GM12878 (cell line): ENCODE measurements at regions of chr2 and their contacts with region 1.

Region 1: GRCh38 chr2:127810619-127811396 is at the start of gene WDR33:
- DNase-seq: peak; percentile 87
- ATAC-seq: peak; percentile 97
- H3K4me3 ChIP-seq: peak within 1 kb of the TSS; percentile 84
- H3K27ac ChIP-seq: peak within 1 kb of the TSS; percentile 96
- H3K4me1 ChIP-seq: peaks cover 6% of the 10 kb centered on the region
- H3K27me3 ChIP-seq: no peaks in the 10 kb centered on the region
- CTCF ChIP-seq: peak; percentile 21 to 51 (median 44); a peak in 4 of 6 replicates
- EP300 ChIP-seq: peak in 1 of 2 experiments; percentile 4; a peak in 1 of 4 replicates
- POLR2A ChIP-seq: peak; percentile 92
- RAD21 ChIP-seq: peak; percentile 64
- polyA plus RNA-seq, gene WDR33: 31.9 to 53.0 TPM

Region 2: DNA sequence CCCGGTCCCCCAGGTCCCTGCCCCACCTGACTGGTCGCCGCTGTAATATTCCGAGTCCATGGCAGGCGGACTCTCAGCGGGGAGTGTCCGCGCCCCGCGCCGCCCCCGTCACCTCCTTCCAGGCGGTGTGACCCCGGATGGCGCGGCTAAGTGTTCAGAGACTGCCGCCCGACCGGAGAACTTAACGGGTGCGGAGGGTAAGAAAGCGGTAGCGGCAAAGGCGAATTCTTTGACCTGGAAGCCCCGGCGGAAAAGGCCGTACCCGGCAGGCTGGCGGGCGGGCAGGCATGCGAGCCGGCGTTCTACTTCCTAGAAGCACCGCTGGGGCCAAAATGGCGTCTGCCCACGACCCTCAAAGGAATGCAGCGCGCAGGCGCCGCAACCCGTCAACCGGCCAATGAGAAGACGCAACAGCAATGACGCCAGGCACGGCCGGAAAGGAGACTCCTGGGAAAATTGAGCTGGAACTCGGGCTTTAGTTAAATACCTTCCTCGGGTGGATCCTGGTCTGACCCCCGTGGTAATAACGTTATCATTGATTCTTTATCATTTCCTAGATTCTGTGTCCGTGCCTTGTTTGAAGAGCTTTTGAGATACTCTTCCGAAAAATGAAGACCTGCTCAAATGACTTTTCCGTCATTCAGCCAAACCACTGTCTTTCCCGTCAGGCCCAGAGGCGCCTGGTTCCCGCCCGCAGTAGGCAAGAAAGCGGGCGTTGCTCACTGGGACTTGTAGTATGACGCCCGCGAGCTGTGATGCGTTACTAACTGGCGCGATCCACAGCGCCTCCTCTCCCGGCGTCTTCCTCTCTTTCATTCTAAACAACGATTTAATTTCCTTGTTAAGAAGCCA is 284.4 kb before region 1 on chr2 and contains the start of gene IWS1:
- CTCF ChIA-PET with region 1: no interaction called
- POLR2A ChIA-PET with region 1: no interaction called
- RAD21 ChIA-PET with region 1: no interaction called
- SMC1A ChIA-PET with region 1: no interaction called
- in situ Hi-C with region 1: no loop called
- intact Hi-C with region 1: loop called (anchors 10 kb)
- DNase-seq: peak; percentile 88
- ATAC-seq: peak; percentile 93
- H3K4me3 ChIP-seq: peak within 1 kb of the TSS; percentile 93
- H3K27ac ChIP-seq: peak within 1 kb of the TSS; percentile 83
- H3K4me1 ChIP-seq: no peaks in the 10 kb centered on the region
- H3K27me3 ChIP-seq: no peaks in the 10 kb centered on the region
- CTCF ChIP-seq: peak in 2 of 3 experiments; percentile 3 to 21; a peak in 1 of 6 replicates
- EP300 ChIP-seq: no peak
- POLR2A ChIP-seq: peak; percentile 91
- RAD21 ChIP-seq: no peak
- polyA plus RNA-seq, gene IWS1: 21.9 to 34.2 TPM

Region 3: DNA sequence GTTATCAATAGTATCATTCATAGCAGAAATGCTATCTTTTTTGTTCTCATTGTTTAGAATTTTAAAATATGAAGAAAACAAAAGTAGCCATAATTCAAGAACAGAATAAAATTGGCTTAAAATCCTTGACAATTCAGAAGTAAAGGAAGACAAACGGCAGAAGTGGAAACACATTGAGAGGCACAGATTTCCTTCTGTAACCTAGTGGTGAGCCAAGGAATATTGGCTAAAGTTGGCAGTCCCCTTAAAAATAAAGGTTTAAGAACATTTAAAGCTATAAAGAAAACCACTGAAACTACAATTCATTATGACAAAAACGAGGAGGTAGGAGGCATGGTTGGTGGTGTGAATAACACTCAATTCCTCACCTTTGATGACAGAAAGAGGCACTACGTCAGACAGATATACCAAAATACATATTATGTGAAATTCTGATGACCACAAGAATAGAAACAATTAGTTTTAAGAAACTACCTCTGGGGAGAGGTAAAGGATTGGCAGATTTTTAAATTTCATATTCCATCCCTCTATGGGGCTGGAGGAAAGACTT is 67.3 kb before region 1 on chr2:
- CTCF ChIA-PET with region 1: interaction called, 3 read pairs
- POLR2A ChIA-PET with region 1: interaction called, 7 read pairs
- RAD21 ChIA-PET with region 1: interaction called, 15 read pairs
- SMC1A ChIA-PET with region 1: interaction called, 4 read pairs
- in situ Hi-C with region 1: no loop called
- intact Hi-C with region 1: no loop called
- DNase-seq: no peak
- ATAC-seq: peak; percentile 86
- H3K4me3 ChIP-seq: no peak overlapping the region
- H3K27ac ChIP-seq: no peak overlapping the region
- H3K4me1 ChIP-seq: no peaks in the 10 kb centered on the region; the same call in 1 of the 2 replicates
- H3K27me3 ChIP-seq: no peaks in the 10 kb centered on the region
- CTCF ChIP-seq: 0 out of 6 replicates have a peak, but pooled peaks of 1 of the 3 experiments have one; percentile 11
- EP300 ChIP-seq: peak; percentile 90 to 92; a peak in 3 of 4 replicates
- POLR2A ChIP-seq: no peak
- RAD21 ChIP-seq: no peak

Region 4: DNA sequence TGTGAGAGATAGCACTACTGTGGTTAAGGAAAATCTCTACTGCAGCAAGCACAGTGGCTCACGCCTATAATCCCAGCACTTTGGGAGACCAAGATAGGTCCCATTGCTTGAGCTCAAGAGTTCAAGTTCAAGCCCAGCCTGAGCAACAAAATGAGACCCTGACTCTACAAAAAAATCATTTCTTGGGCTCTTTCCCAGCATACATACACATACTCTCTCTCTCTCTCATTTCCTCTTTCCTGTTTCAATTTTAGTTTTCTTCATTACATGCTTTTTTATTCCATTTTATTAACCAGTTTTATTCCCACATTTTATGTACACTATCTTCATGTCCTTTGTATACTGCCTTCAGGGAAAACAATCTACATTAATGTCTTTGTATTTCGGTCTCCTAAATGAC is 14.4 kb before region 1 on chr2:
- CTCF ChIA-PET with region 1: interaction called, 4 read pairs
- POLR2A ChIA-PET with region 1: interaction called, 50 read pairs
- RAD21 ChIA-PET with region 1: interaction called, 5 read pairs
- SMC1A ChIA-PET with region 1: interaction called, 19 read pairs
- in situ Hi-C with region 1: no loop called
- intact Hi-C with region 1: no loop called
- DNase-seq: peak; percentile 17
- ATAC-seq: peak; percentile 66
- H3K4me3 ChIP-seq: no peak overlapping the region; the same call in 1 of the 2 replicates
- H3K27ac ChIP-seq: peak overlapping the region; percentile 37; the same call in 1 of the 2 replicates
- H3K4me1 ChIP-seq: peaks cover 29% of the 10 kb centered on the region
- H3K27me3 ChIP-seq: no peaks in the 10 kb centered on the region
- CTCF ChIP-seq: no peak
- EP300 ChIP-seq: peak in 1 of 2 experiments; percentile 36; a peak in 1 of 4 replicates
- POLR2A ChIP-seq: no peak
- RAD21 ChIP-seq: no peak

Region 5: DNA sequence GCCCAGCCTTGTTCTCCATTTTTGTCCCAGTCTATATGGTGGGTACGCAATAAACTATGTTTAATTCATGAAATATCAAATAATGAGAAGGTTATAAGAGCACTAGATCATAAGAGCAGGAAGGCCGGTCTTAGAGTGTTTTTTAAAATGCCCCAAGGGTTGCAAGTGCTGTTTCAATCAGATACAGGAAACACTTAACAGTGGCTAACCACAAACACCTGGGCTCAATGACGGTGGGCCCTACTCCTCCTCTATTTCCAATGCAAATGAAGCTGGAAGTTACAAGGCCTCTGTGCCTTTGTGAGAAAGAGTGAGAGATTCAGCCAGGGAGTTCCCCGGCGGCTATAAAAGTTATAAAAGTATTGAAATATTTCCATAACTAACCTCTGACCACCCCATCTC is 19.0 kb after region 1 on chr2:
- CTCF ChIA-PET with region 1: interaction called, 12 read pairs
- POLR2A ChIA-PET with region 1: interaction called, 15 read pairs
- RAD21 ChIA-PET with region 1: interaction called, 9 read pairs
- SMC1A ChIA-PET with region 1: interaction called, 17 read pairs
- in situ Hi-C with region 1: no loop called
- intact Hi-C with region 1: no loop called
- DNase-seq: peak; percentile 96
- ATAC-seq: peak; percentile 94
- H3K4me3 ChIP-seq: peak overlapping the region; percentile 35; the same call in 1 of the 2 replicates
- H3K27ac ChIP-seq: peak overlapping the region; percentile 92
- H3K4me1 ChIP-seq: peaks cover 38% of the 10 kb centered on the region
- H3K27me3 ChIP-seq: no peaks in the 10 kb centered on the region
- CTCF ChIP-seq: no peak
- EP300 ChIP-seq: peak; percentile 92 to 94
- POLR2A ChIP-seq: no peak
- RAD21 ChIP-seq: no peak

Region 6: GRCh38 chr2:127841466-127842178 is 30.8 kb after region 1 on chr2:
- CTCF ChIA-PET with region 1: no interaction called
- POLR2A ChIA-PET with region 1: no interaction called
- RAD21 ChIA-PET with region 1: no interaction called
- SMC1A ChIA-PET with region 1: no interaction called
- in situ Hi-C with region 1: no loop called
- intact Hi-C with region 1: no loop called
- DNase-seq: no peak
- ATAC-seq: no peak
- H3K4me3 ChIP-seq: no peak overlapping the region
- H3K27ac ChIP-seq: no peak overlapping the region
- H3K4me1 ChIP-seq: no peaks in the 10 kb centered on the region
- H3K27me3 ChIP-seq: no peaks in the 10 kb centered on the region
- CTCF ChIP-seq: no peak
- EP300 ChIP-seq: no peak
- POLR2A ChIP-seq: no peak
- RAD21 ChIP-seq: no peak

Region 7: GRCh38 chr2:127857265-127857808 is 46.5 kb after region 1 on chr2:
- CTCF ChIA-PET with region 1: interaction called, 4 read pairs
- POLR2A ChIA-PET with region 1: no interaction called
- RAD21 ChIA-PET with region 1: interaction called, 6 read pairs
- SMC1A ChIA-PET with region 1: interaction called, 14 read pairs
- in situ Hi-C with region 1: no loop called
- intact Hi-C with region 1: loop called (anchors 5 kb)
- DNase-seq: no peak
- ATAC-seq: peak; percentile 43
- H3K4me3 ChIP-seq: peak overlapping the region; percentile 93
- H3K27ac ChIP-seq: peak overlapping the region; percentile 65
- H3K4me1 ChIP-seq: 0 out of 2 replicates have a peak, but pooled peaks cover 2% of the 10 kb centered on the region
- H3K27me3 ChIP-seq: no peaks in the 10 kb centered on the region
- CTCF ChIP-seq: no peak
- EP300 ChIP-seq: no peak
- POLR2A ChIP-seq: no peak
- RAD21 ChIP-seq: no peak

Region 8: GRCh38 chr2:128489526-128490273 is 678.9 kb after region 1 on chr2:
- CTCF ChIA-PET with region 1: no interaction called
- POLR2A ChIA-PET with region 1: no interaction called
- RAD21 ChIA-PET with region 1: no interaction called
- SMC1A ChIA-PET with region 1: no interaction called
- in situ Hi-C with region 1: no loop called
- intact Hi-C with region 1: no loop called
- DNase-seq: no peak
- ATAC-seq: no peak
- H3K4me3 ChIP-seq: no peak overlapping the region
- H3K27ac ChIP-seq: no peak overlapping the region
- H3K4me1 ChIP-seq: no peaks in the 10 kb centered on the region
- H3K27me3 ChIP-seq: peaks cover 0 to 3% of the 10 kb centered on the region in 2 experiments; a peak in 1 of 4 replicates
- CTCF ChIP-seq: no peak
- EP300 ChIP-seq: no peak
- POLR2A ChIP-seq: no peak
- RAD21 ChIP-seq: no peak